Activated B cell treated with CpG ODN at 0.5 μM for 24 hours (primary cell): ENCODE measurements at regions of chr2 and their contacts with region 1.

Region 1: GRCh38 chr2:54106631-54107454 is 8.6 kb upstream of the ACYP2 start:
- DNase-seq: no peak
- ATAC-seq: peak; percentile 35
- H3K4me3 Mint-ChIP-seq: no peak overlapping the region
- H3K27ac Mint-ChIP-seq: peak overlapping the region; percentile 12
- H3K4me1 Mint-ChIP-seq: peaks cover 51% of the 10 kb centered on the region
- H3K27me3 Mint-ChIP-seq: no peaks in the 10 kb centered on the region
- CTCF ChIP-seq: peak; percentile 45

Region 2: GRCh38 chr2:53970724-53971602 is 135.9 kb before region 1 on chr2 and contains the start of gene PSME4:
- CTCF ChIA-PET with region 1: interaction called, 6 read pairs
- POLR2A ChIA-PET with region 1: interaction called, 33 read pairs
- intact Hi-C with region 1: no loop called
- DNase-seq: peak; percentile 97
- ATAC-seq: peak; percentile 90
- H3K4me3 Mint-ChIP-seq: peak within 1 kb of the TSS; percentile 94
- H3K27ac Mint-ChIP-seq: peak within 1 kb of the TSS; percentile 94
- H3K4me1 Mint-ChIP-seq: peaks cover 49% of the 10 kb centered on the region
- H3K27me3 Mint-ChIP-seq: no peaks in the 10 kb centered on the region
- CTCF ChIP-seq: no peak
- total RNA-seq, gene PSME4: 73.2 and 74.3 TPM in 2 replicates

Region 3: DNA sequence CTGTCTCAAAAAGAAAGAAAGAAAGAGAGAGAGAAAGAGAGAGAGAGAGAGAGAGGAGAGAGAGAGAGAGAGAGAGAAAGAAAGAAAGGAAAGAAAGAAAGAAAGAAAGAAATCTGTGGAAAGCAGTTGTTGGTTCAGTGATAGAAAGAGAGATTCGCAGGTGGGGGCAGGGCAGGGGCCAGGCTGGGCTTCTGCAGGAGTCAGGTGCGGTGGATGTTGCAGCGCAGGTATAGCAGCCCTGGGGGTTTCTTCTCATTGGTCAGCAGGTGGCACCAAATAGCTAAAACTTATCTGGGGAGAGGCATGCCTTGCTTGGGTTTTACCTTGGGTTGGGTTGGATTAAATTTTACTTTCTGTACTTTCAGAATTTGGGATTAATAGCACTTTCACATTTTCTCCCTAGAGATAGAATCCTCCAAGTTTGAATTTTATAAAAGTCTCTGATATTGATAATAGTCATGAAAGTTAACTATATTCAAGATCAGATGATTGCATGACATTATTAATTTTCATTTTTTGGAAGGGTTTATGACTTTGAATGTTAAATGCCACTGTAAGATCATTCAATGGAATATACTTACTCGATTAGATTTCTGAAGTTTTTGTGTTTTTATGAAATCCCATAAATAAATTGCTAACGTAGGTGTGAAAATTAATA is 415.9 kb after region 1 on chr2:
- CTCF ChIA-PET with region 1: interaction called, 22 read pairs
- POLR2A ChIA-PET with region 1: no interaction called
- intact Hi-C with region 1: loop called (anchors 1 kb)
- DNase-seq: peak; percentile 35
- ATAC-seq: peak; percentile 94
- H3K4me3 Mint-ChIP-seq: no peak overlapping the region
- H3K27ac Mint-ChIP-seq: no peak overlapping the region
- H3K4me1 Mint-ChIP-seq: peaks cover 15% of the 10 kb centered on the region
- H3K27me3 Mint-ChIP-seq: no peaks in the 10 kb centered on the region
- CTCF ChIP-seq: peak; percentile 81

Region 4: DNA sequence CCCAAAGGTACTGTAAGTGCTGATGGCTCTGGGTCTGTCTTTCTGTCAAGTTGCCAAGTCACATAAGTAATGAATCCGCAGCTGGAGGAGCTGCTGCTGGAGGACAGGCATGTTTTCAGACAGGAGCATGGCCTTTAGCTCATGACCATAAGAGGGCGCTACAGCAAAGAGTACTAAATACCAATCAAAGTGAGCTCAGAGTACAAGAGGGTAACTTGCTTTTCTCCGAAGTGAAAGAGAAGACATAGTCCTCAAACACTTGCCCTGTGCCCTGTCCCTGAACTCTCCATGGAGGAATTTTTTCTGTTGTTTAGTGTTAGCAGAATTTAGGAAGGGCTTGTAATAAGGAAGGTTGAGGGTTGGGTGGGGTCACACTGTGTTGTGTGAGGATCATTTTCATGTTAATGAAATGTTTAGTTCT is 558.6 kb after region 1 on chr2:
- CTCF ChIA-PET with region 1: interaction called, 14 read pairs
- POLR2A ChIA-PET with region 1: no interaction called
- intact Hi-C with region 1: no loop called
- DNase-seq: no peak
- ATAC-seq: peak; percentile 52
- H3K4me3 Mint-ChIP-seq: no peak overlapping the region
- H3K27ac Mint-ChIP-seq: no peak overlapping the region
- H3K4me1 Mint-ChIP-seq: no peaks in the 10 kb centered on the region
- H3K27me3 Mint-ChIP-seq: no peaks in the 10 kb centered on the region
- CTCF ChIP-seq: no peak

Region 5: GRCh38 chr2:54838585-54839035 is 731.8 kb after region 1 on chr2:
- CTCF ChIA-PET with region 1: interaction called, 38 read pairs
- POLR2A ChIA-PET with region 1: no interaction called
- intact Hi-C with region 1: loop called (anchors 1 kb)
- DNase-seq: peak; percentile 27
- ATAC-seq: peak; percentile 91
- H3K4me3 Mint-ChIP-seq: no peak overlapping the region
- H3K27ac Mint-ChIP-seq: no peak overlapping the region
- H3K4me1 Mint-ChIP-seq: peaks cover 4% of the 10 kb centered on the region
- H3K27me3 Mint-ChIP-seq: no peaks in the 10 kb centered on the region
- CTCF ChIP-seq: peak; percentile 58

Region 6: GRCh38 chr2:55419679-55420438 is 1313.0 kb after region 1 on chr2 and contains the start of gene CCDC88A:
- CTCF ChIA-PET with region 1: no interaction called
- POLR2A ChIA-PET with region 1: no interaction called
- intact Hi-C with region 1: loop called (anchors 5 kb)
- DNase-seq: peak; percentile 86
- ATAC-seq: peak; percentile 87
- H3K4me3 Mint-ChIP-seq: peak within 1 kb of the TSS; percentile 95
- H3K27ac Mint-ChIP-seq: peak within 1 kb of the TSS; percentile 92
- H3K4me1 Mint-ChIP-seq: peaks cover 46% of the 10 kb centered on the region
- H3K27me3 Mint-ChIP-seq: no peaks in the 10 kb centered on the region
- CTCF ChIP-seq: no peak
- total RNA-seq, gene CCDC88A: 25.6 and 35.6 TPM in 2 replicates